ENCODE measurements at regions of chr5 and their contacts with region 1.

Region 1: GRCh38 chr5:139633295-139634027 is 14.7 kb upstream of the CXXC5 start:
- DNase-seq: peak; percentile 56 to 86 (median 66)
- H3K4me3 ChIP-seq: no peak overlapping the region
- H3K27ac ChIP-seq: no peak overlapping the region
- H3K4me1 ChIP-seq: peaks cover 14 to 32% of the 10 kb centered on the region in 2 donors
- H3K27me3 ChIP-seq: no peaks in the 10 kb centered on the region
- CTCF ChIP-seq: peak; percentile 94 to 99 (median 97)
- POLR2A ChIP-seq: no peak

Region 2: GRCh38 chr5:139678751-139679750 is 45.6 kb after region 1 on chr5:
- intact Hi-C with region 1: loop called in 1 of 2 experiments (anchors 5 kb)
- DNase-seq: no peak
- H3K4me3 ChIP-seq: no peak overlapping the region
- H3K27ac ChIP-seq: peak overlapping the region in 2 of 5 donors; percentile 49 to 69
- H3K4me1 ChIP-seq: peaks cover 0 to 28% of the 10 kb centered on the region in 2 donors
- H3K27me3 ChIP-seq: no peaks in the 10 kb centered on the region
- CTCF ChIP-seq: no peak
- POLR2A ChIP-seq: no peak

Region 3: DNA sequence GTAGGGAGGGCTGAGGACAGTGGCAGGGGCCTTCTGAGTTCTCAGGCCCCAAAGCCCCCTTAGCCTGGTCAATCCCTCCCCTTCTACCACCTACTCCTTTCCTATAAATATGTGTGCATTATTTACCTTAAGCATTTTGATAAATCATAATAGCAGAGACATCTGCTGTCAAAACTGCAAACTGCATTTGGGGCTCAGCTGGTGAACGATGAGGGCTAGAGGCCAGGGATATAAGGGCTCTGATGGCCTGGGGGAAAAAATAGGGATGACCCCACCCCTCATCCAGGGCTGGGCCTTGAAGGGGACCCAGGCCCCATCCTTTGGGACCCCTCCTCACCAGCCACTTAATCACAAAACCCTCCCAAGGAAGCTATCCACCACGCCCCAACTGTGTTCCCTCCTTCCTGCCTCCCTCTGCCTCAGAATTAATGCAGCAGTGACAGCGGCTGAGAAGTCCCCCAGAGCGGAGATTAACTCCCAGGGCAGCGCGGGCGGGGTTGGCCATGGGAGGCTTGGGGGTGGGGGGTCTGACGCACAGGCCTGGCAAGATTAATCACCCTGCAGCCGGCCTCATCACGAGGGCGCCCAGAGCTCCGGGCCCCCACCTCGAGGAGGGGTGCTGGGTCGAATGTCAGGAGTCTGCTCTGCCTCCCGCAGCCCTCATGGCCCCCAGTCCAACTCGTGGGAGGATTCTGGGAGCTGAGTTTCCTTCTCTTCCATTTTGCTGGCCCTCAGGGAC is 56.8 kb after region 1 on chr5:
- intact Hi-C with region 1: loop called (anchors 5 kb)
- DNase-seq: peak in 4 of 7 donors; percentile 37 to 66 (median 56)
- H3K4me3 ChIP-seq: no peak overlapping the region
- H3K27ac ChIP-seq: peak overlapping the region in 1 of 5 donors; percentile 49
- H3K4me1 ChIP-seq: peaks cover 10 to 26% of the 10 kb centered on the region in 2 donors
- H3K27me3 ChIP-seq: no peaks in the 10 kb centered on the region
- CTCF ChIP-seq: peak in 5 of 6 experiments; percentile 36 to 66 (median 48)
- POLR2A ChIP-seq: no peak

Measured in adrenal gland (tissue), 19 donors.